ENCODE measurements at regions of chr5 and their contacts with region 1.

Region 1: DNA sequence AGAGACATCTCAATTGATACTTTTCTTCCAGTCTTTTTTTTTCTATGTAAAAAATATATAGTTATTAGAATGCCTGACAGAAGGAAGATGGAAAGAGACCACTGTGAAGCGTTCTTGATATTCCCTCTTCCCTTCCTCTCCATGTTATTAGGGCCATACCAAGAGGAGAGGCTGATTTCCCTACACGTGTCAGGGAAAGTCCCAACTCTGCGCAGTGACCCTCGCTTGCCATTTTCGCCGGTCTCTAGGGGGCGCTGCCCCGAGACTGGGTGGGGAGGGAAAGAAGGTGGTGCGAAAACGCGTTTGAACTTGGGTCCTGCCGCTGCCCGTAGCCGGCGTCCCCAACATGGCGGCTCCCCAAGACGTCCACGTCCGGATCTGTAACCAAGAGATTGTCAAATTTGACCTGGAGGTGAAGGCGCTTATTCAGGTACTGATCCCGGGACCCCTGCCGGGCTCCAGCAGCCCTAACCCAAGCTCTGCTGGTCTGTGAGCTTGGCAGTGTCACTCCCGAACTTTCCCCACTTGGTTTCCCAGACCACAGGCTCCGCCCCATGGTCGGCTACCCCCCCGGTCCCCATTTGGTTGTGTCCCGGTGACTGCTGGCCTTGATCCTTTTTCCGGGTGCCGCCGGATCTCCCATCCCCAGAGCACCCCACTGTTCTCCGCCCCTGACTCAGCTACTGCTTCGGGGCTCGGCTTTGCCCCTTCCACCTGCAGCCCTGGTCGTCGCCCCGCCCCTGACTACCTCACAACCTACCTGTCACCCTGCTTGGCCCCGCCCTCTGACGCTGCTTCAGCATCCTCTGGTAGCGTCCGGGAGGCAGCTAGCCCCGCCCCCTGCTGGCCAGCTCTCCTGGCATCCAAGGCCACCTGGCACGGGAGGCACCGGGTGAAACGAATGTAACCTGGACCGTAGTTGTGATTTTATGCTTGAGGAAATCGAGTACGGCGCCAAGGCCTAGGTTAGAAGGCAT is at the start of gene BNIP1:
- DNase-seq: peak; percentile 86 to 97 (median 90)
- H3K4me3 ChIP-seq: peak within 1 kb of the TSS; percentile 63 to 99 (median 94)
- H3K27ac ChIP-seq: peak within 1 kb of the TSS in 58 of 59 donors; percentile 36 to 96 (median 85)
- H3K27me3 ChIP-seq: no peaks in the 10 kb centered on the region
- CTCF ChIP-seq: peak; percentile 82 to 100 (median 96)
- total RNA-seq, gene BNIP1: 6.2 to 18.9 (median 11.5) TPM

Region 2: DNA sequence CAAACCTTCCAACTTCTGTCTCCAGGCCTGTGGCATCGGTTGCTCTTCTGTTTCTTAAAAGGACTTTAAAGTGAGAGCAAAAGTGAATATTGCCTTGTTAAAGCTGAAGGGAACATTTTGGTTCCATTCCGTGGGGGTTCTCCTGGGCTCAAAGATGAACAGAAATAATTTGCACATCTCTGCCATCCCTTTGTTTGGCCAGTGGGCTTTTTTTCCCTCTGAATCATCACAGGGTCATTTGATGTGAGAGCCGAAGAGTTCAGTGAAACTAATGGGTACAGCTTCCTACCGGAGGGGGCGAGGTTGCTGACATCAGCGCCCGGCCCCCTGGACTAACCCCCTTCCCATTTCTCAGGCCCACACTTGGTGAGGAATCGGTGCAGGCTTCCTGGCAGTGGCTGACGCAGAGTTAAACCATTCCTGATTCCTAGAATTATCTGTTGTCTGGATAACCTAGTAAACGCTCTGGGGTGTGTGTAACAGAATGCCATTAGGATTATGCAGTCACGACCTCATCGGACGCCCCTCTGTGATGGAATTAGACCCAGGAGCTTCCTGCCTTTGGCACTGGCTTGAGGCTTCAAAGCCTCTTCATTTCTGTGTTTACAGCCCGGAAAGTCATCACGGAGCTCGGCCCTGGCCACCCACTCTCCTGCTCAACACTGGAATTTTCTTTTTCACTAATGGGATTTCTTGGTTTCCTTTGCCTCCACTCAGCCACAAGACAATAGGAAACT is 246.8 kb before region 1 on chr5:
- intact Hi-C with region 1: no loop called
- DNase-seq: no peak
- H3K4me3 ChIP-seq: peak overlapping the region in 20 of 59 donors; percentile 3 to 50 (median 31)
- H3K27ac ChIP-seq: peak overlapping the region in 55 of 59 donors; percentile 1 to 92 (median 72)
- H3K27me3 ChIP-seq: no peaks in the 10 kb centered on the region
- CTCF ChIP-seq: no peak

Region 3: DNA sequence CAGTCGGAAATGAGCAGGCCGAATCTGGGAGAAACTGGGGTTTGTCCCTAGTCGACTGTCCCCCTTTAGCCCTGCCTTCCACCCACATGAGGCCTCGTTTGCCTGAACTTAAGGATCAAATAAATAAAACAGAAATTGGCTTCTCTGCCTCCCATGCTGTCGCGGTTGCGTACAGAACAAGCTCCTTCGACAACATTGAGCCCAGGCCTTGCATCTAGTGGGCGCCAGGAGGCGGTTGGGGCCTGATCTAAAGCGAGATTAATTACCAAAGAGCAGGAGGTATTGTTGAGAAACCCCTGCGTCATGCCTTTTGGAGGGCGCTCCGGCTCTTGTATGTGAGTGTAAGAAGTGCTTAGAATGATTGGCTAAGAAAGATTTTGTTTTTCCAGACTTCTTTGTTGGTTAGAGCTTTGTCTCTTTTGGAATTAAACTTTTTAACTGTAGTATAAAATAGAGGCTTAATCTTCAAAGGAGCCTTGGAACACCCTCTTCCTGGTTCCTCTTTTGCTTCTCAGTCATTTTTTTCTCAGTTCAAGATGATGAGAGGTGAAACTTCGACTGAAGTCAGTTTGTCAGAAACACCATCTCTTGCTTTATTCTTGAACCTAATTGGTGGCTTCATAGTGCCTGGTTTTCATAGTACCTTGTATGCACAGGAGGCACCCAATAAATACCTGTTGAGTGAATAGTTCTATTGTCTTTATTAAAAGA is 160.1 kb before region 1 on chr5:
- intact Hi-C with region 1: loop called (anchors 1 to 10 kb)
- DNase-seq: peak in 9 of 10 donors; percentile 10 to 71 (median 57)
- H3K4me3 ChIP-seq: peak overlapping the region; percentile 59 to 100 (median 93)
- H3K27ac ChIP-seq: peak overlapping the region; percentile 67 to 97 (median 91)
- H3K27me3 ChIP-seq: no peaks in the 10 kb centered on the region
- CTCF ChIP-seq: peak in 34 of 56 donors; percentile 11 to 49 (median 25)

Region 4: GRCh38 chr5:173057062-173057924 is 87.2 kb before region 1 on chr5:
- intact Hi-C with region 1: loop called in 1 of 2 experiments (anchors 2 kb)
- DNase-seq: peak; percentile 97 to 99 (median 98)
- H3K4me3 ChIP-seq: peak overlapping the region; percentile 73 to 100 (median 95)
- H3K27ac ChIP-seq: peak overlapping the region; percentile 93 to 100 (median 99)
- H3K27me3 ChIP-seq: no peaks in the 10 kb centered on the region
- CTCF ChIP-seq: peak in 25 of 56 donors; percentile 7 to 42 (median 18)

Region 5: DNA sequence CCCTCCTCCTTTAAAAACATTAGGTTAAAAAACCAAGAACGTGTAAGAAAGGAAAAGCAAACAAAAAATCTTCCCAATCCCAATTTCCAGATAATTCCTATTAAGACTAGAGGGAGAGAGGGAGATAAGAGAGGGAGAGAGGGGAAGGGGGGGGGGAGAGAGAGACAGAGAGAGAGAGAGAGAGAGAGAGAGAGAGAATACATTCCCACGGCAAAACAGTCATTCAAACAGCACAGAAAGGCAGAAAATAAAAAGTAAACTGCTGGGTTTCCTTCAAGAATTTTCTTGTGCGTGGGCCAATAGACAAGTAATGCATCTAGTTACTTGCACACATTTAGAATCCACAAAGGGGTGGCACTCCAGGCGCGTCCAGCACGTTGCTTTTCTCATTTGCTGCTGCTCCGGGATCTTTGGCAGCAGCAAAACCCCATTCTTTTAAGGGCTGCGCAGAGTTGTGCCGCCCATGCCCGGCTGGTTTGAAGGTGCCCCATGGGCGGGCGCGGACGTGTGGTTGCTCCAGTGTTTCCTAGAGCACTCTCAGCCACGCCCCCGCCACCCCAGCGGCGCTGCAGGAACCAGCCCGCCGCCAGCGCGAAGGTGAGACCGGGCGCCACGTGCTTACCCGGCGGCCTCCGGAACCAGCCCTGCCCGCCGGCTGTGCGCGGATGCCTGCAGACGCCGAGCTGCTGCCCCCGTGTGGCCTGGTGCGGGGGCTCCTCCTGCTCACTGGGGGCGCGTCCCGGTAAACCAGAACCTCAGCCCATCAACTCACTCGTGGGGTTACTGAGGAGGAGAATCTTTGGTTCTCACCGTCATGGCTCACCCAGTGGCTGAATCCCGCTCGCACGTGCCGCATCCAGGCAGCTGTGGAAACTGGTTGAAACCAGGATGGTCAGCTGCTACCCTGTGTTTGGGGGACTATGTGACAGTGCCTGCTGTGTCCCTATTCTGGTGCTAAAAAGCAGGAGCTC is 139.1 kb after region 1 on chr5:
- intact Hi-C with region 1: loop called in 1 of 2 experiments (anchors 10 kb)
- DNase-seq: peak in 9 of 10 donors; percentile 18 to 83 (median 48)
- H3K4me3 ChIP-seq: peak overlapping the region; percentile 12 to 65 (median 45)
- H3K27ac ChIP-seq: no peak overlapping the region
- H3K27me3 ChIP-seq: peaks cover 0 to 62% (median 11%) of the 10 kb centered on the region in 45 donors
- CTCF ChIP-seq: peak; percentile 43 to 88 (median 76)

Region 6: DNA sequence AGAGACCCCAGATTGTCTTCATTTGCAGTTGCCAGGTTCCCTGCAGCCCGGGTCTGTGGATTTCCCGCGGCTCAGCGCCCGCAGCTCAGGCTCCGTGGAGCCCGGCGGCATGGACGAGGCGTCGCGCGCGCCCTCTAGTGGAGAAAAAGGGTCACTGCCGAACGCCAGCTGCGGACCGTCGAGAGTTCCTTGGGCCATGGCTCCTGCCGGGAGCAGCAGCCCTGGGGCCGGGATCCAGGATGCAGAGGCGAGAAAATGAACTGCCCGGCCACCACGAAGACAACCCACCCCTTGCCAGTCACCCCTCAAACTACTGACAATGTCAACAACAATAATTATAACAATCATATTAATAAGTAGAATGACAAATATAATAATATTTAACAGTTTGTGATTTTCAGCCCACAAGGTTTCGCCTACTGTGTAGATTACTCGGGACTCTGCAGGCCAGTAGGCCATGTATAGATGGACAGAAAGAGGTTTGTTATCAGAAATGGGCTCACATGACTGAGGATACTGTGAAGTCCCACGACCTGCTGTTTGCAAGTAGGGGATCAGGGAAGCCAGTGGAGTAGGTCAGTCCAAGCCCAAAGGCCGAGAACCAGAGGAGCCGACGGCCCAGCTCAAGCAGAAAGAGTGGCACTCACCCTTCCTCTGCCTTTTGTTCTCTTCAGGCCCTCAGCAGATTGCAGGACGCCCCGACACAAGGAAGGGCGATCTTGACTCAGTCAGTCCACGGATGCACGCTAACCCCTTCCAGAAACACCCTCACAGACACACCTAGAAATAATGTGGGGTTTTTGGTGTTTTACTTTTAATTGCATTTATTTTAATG is 428.9 kb after region 1 on chr5:
- intact Hi-C with region 1: loop called in 1 of 2 experiments (anchors 10 kb)
- DNase-seq: peak; percentile 69 to 92 (median 78)
- H3K4me3 ChIP-seq: peak overlapping the region in 45 of 59 donors; percentile 5 to 59 (median 39)
- H3K27ac ChIP-seq: peak overlapping the region in 16 of 59 donors; percentile 5 to 65 (median 30)
- H3K27me3 ChIP-seq: no peaks in the 10 kb centered on the region
- CTCF ChIP-seq: peak; percentile 92 to 100 (median 98)

Measured in dorsolateral prefrontal cortex (tissue), 120 donors.